ENCODE measurements at regions of chr11 and their contacts with region 1.

Region 1: GRCh38 chr11:47454180-47454644 is 5.3 kb upstream of the RAPSN start:
- H3K4me3 ChIP-seq: no peak overlapping the region
- H3K27ac ChIP-seq: no peak overlapping the region
- H3K4me1 ChIP-seq: no peaks in the 10 kb centered on the region
- CTCF ChIP-seq: peak; percentile 79

Region 2: DNA sequence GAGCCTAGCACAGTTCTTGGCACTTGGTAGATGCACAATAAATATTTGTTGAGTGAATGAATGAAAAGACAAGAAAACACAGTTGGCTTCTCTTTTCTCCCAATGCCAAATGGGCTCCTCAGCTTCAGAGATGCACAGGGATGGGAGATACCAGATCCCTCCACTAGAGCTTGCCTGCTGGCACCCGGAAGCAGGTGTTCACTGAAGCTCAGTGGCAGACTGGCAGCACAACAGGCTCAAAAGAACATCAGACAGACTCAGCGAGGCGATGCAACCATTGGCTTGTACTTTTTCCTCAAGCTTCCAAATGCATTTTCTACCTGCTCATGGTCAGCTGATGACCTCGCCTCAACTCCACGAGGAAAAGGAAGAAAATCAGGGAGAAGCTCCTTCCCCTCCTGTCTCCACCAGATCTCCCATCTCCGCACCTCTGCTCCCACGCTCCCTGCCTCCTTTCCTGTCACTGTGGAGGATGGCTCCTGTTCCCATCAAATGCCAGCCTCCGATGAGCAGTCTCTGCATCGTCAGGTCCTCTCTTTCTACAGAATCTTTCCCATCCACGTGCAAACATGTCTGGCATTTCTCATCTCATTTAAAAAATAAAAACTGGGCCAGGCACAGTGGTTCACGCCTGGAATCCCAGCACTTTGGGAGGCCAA is 11.0 kb before region 1 on chr11:
- CTCF ChIA-PET with region 1: interaction called, 12 read pairs
- POLR2A ChIA-PET with region 1: no interaction called
- H3K4me3 ChIP-seq: no peak overlapping the region
- H3K27ac ChIP-seq: no peak overlapping the region
- H3K4me1 ChIP-seq: no peaks in the 10 kb centered on the region
- CTCF ChIP-seq: peak; percentile 42

Region 3: GRCh38 chr11:47464483-47464882 is 10.3 kb after region 1 on chr11:
- CTCF ChIA-PET with region 1: interaction called, 11 read pairs
- POLR2A ChIA-PET with region 1: no interaction called
- H3K4me3 ChIP-seq: no peak overlapping the region
- H3K27ac ChIP-seq: no peak overlapping the region
- H3K4me1 ChIP-seq: peaks cover 11% of the 10 kb centered on the region
- CTCF ChIP-seq: no peak